ENCODE measurements at regions of chr7 and their contacts with region 1.

Region 1: GRCh38 chr7:30062591-30062990 is 34.4 kb downstream of the PLEKHA8 start:
- DNase-seq: peak; percentile 42
- H3K4me3 ChIP-seq: no peak overlapping the region
- H3K27ac ChIP-seq: no peak overlapping the region
- H3K4me1 ChIP-seq: no peaks in the 10 kb centered on the region
- H3K27me3 ChIP-seq: no peaks in the 10 kb centered on the region
- CTCF ChIP-seq: peak; percentile 39 to 50
- POLR2A ChIP-seq: no peak

Region 2: DNA sequence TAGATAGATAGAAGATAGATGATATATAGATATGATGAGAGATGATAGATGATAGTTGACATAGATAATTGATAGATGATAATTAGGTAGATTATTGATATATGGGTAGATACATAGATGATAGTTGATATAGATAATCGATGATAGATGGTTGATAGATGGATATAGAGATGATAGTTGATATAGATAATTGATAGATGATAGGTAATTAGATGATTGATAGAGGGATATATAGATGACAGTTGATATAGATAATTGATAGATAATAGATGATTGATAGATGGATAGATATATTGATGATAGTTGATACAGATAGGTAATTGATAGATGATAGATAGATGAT is 426.6 kb before region 1 on chr7:
- CTCF ChIA-PET with region 1: interaction called, 18 read pairs
- POLR2A ChIA-PET with region 1: no interaction called
- dilution Hi-C with region 1: no loop called
- intact Hi-C with region 1: no loop called
- DNase-seq: no peak
- H3K4me3 ChIP-seq: no peak overlapping the region
- H3K27ac ChIP-seq: no peak overlapping the region
- H3K4me1 ChIP-seq: no peaks in the 10 kb centered on the region
- H3K27me3 ChIP-seq: no peaks in the 10 kb centered on the region
- CTCF ChIP-seq: no peak
- POLR2A ChIP-seq: no peak

Region 3: GRCh38 chr7:29921404-29922010 is 141.1 kb before region 1 on chr7:
- CTCF ChIA-PET with region 1: interaction called, 22 read pairs
- POLR2A ChIA-PET with region 1: no interaction called
- dilution Hi-C with region 1: no loop called
- intact Hi-C with region 1: no loop called
- DNase-seq: peak; percentile 76
- H3K4me3 ChIP-seq: no peak overlapping the region
- H3K27ac ChIP-seq: no peak overlapping the region
- H3K4me1 ChIP-seq: no peaks in the 10 kb centered on the region
- H3K27me3 ChIP-seq: no peaks in the 10 kb centered on the region
- CTCF ChIP-seq: peak; percentile 84 to 89
- POLR2A ChIP-seq: no peak

Region 4: DNA sequence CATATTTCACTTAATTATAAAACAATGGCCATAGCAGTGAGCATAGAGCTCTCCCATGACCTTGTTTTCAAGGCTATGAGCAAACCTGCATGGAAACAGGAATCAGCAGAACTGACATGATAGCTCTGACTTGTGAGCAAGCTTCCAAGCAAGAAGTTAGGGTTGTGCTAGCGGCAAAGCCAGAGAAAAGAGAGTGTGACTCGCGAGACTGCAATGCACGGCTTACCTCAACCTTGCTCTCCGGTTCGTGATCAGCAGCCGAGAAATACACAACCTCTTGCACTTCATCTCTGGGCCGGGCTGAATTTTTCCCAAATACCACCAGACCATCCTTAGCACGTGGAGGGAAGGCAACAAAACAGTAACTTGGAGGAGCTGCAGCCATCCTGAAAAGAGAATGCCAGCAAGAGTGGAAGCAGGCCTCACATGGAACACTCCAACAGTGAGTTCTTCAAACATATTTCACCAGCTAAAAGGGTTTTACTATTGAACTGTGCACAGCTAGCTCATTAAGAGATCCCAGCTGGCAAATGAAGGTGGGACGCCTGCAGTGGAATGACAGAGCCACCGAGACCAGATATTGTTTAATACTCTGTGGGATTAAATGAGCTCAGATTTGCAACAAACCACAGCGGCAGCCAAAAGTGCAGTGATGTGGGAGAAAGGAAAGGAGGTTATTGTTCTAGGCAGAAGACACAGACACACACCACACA is 93.8 kb before region 1 on chr7:
- CTCF ChIA-PET with region 1: interaction called, 11 read pairs
- POLR2A ChIA-PET with region 1: no interaction called
- dilution Hi-C with region 1: no loop called
- intact Hi-C with region 1: no loop called
- DNase-seq: no peak
- H3K4me3 ChIP-seq: no peak overlapping the region
- H3K27ac ChIP-seq: no peak overlapping the region
- H3K4me1 ChIP-seq: peaks cover 6% of the 10 kb centered on the region
- H3K27me3 ChIP-seq: no peaks in the 10 kb centered on the region
- CTCF ChIP-seq: no peak
- POLR2A ChIP-seq: no peak

Region 5: DNA sequence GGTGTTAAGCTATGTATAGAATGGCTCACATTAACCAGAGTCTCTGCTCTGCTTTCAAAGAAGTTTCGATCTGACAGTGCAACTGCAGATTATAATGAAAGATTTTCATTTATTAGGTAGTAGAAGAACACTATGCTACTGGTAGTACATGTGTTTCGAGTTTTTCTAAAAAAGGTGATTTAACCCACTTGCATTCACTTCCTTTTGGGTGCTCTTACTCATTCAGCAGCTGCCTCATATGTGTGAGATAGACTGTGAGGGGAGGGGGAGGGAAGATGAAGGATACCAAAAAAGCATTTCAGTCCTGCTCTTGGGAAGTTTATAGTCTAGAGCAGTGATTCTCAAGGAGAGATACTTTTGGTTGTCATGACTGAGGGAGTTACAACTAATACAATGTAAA is 14.0 kb before region 1 on chr7:
- CTCF ChIA-PET with region 1: interaction called, 15 read pairs
- POLR2A ChIA-PET with region 1: no interaction called
- dilution Hi-C with region 1: no loop called
- intact Hi-C with region 1: no loop called
- DNase-seq: no peak
- H3K4me3 ChIP-seq: no peak overlapping the region
- H3K27ac ChIP-seq: no peak overlapping the region
- H3K4me1 ChIP-seq: no peaks in the 10 kb centered on the region
- H3K27me3 ChIP-seq: no peaks in the 10 kb centered on the region
- CTCF ChIP-seq: no peak
- POLR2A ChIP-seq: no peak

Region 6: GRCh38 chr7:30564243-30564892 is 501.8 kb after region 1 on chr7:
- CTCF ChIA-PET with region 1: interaction called, 7 read pairs
- POLR2A ChIA-PET with region 1: no interaction called
- dilution Hi-C with region 1: no loop called
- intact Hi-C with region 1: loop called (anchors 10 kb)
- DNase-seq: peak; percentile 89
- H3K4me3 ChIP-seq: no peak overlapping the region
- H3K27ac ChIP-seq: peak overlapping the region; percentile 50
- H3K4me1 ChIP-seq: peaks cover 38% of the 10 kb centered on the region
- H3K27me3 ChIP-seq: no peaks in the 10 kb centered on the region
- CTCF ChIP-seq: peak; percentile 70 to 88
- POLR2A ChIP-seq: no peak